Activated B cell treated with CpG ODN at 0.5 μM for 24 hours (primary cell): ENCODE measurements at regions of chr19 and their contacts with region 1.

Region 1: DNA sequence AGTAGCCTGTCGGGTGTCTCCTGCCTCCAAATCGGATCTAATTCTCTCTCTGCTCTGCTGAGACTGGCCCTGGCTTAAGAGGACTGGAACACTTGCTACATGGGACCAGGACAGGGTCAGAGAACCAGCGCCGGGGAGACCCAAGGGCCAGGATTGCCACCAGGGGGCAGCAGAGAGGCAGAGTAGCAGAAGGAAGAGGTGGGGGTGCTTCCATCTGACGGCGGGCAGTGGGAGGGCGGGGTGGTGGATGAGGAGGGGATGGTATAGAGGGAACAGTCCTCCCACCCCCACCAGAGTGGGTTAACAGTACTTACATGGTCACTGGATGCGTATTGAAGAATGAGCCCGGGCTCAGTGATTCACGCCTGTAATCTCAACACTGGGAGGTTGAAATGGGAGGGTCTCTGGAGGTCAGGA is 11.9 kb downstream of the SELENOW start:
- DNase-seq: peak; percentile 74
- ATAC-seq: peak; percentile 58
- H3K4me3 Mint-ChIP-seq: no peak overlapping the region
- H3K27ac Mint-ChIP-seq: no peak overlapping the region
- H3K4me1 Mint-ChIP-seq: no peaks in the 10 kb centered on the region
- H3K27me3 Mint-ChIP-seq: peaks cover 2% of the 10 kb centered on the region
- CTCF ChIP-seq: peak; percentile 17

Region 2: GRCh38 chr19:47697863-47698609 is 92.4 kb before region 1 on chr19:
- CTCF ChIA-PET with region 1: no interaction called
- POLR2A ChIA-PET with region 1: no interaction called
- intact Hi-C with region 1: loop called (anchors 1 kb)
- DNase-seq: peak; percentile 37
- ATAC-seq: peak; percentile 71
- H3K4me3 Mint-ChIP-seq: no peak overlapping the region
- H3K27ac Mint-ChIP-seq: no peak overlapping the region
- H3K4me1 Mint-ChIP-seq: no peaks in the 10 kb centered on the region
- H3K27me3 Mint-ChIP-seq: no peaks in the 10 kb centered on the region
- CTCF ChIP-seq: no peak

Region 3: GRCh38 chr19:47765523-47766358 is 24.7 kb before region 1 on chr19:
- CTCF ChIA-PET with region 1: interaction called, 9 read pairs
- POLR2A ChIA-PET with region 1: no interaction called
- intact Hi-C with region 1: loop called (anchors 1 kb)
- DNase-seq: no peak
- ATAC-seq: no peak
- H3K4me3 Mint-ChIP-seq: no peak overlapping the region
- H3K27ac Mint-ChIP-seq: no peak overlapping the region
- H3K4me1 Mint-ChIP-seq: no peaks in the 10 kb centered on the region
- H3K27me3 Mint-ChIP-seq: no peaks in the 10 kb centered on the region
- CTCF ChIP-seq: no peak